G401 (cell line): ENCODE measurements at regions of chr1 and their contacts with region 1.

Region 1: GRCh38 chr1:52615489-52616042 is 13.4 kb downstream of the GPX7 start:
- DNase-seq: no peak

Region 2: GRCh38 chr1:52216907-52217458 is 398.6 kb before region 1 on chr1:
- in situ Hi-C with region 1: no loop called
- DNase-seq: no peak

Region 3: GRCh38 chr1:52659356-52659755 is 43.8 kb after region 1 on chr1:
- in situ Hi-C with region 1: loop called (anchors 5 kb)
- DNase-seq: no peak

Region 4: GRCh38 chr1:52726265-52727113 is 110.9 kb after region 1 on chr1 and contains the start of gene ZYG11B:
- in situ Hi-C with region 1: no loop called
- DNase-seq: peak; percentile 86
- total RNA-seq, gene ZYG11B: 9.4 and 15.8 TPM in 2 replicates